Activated CD4-positive, alpha-beta T cell treated with anti-CD3 and anti-CD28 coated beads, Interleukin-2, amount 10 ng/mL, durations not matched to agents 24 days and 14 days (primary cell): ENCODE measurements at regions of chr2 and their contacts with region 1.

Region 1: GRCh38 chr2:238203094-238203972 is at the start of gene ILKAP:
- DNase-seq: peak; percentile 97
- H3K4me3 Mint-ChIP-seq: peak within 1 kb of the TSS; percentile 87
- H3K27ac Mint-ChIP-seq: peak within 1 kb of the TSS; percentile 87
- H3K4me1 Mint-ChIP-seq: peaks cover 29% of the 10 kb centered on the region
- H3K27me3 Mint-ChIP-seq: no peaks in the 10 kb centered on the region
- total RNA-seq, gene ILKAP: 74.4 and 77.4 TPM in 2 replicates

Region 2: DNA sequence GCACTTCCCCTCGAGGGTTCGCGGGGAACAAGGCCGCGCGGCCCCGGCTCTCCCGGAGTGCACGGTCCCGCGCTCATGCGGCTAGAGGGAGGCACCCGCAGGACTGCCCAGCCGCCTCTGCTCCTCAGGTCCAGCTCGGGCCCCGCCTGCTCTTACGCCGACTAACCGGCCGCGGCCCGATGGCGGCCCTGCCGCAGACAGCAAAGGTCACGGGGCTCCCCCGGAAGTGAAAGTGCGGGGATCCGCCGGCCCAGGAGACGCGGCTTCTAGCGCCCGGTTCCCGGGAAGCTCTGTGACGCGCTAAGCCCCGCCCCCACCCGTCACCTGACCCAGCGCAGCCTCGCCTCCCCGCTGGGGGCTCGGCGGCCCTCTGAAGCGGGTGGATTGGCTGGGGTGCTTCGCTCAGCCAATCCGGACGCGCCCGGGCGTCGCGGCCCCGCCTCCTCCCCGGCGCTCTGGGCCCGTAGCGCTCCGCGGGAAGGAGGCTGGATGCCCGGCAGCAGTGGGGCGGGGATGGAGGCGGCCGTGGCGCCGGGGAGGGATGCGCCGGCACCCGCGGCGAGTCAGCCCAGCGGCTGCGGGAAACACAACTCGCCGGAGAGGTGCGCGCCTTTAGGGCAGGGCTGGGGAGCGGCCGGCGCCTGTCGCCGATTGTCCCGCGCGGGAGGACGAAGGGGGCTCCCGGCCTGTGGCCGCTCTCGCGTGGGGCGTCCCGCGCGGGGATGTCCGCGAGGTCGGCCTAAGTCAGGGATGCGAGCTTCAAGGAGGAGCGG is 142.6 kb before region 1 on chr2 and contains the start of gene SCLY:
- intact Hi-C with region 1: loop called (anchors 2 kb)
- DNase-seq: peak; percentile 98
- H3K4me3 Mint-ChIP-seq: peak within 1 kb of the TSS; percentile 91
- H3K27ac Mint-ChIP-seq: peak within 1 kb of the TSS; percentile 95
- H3K4me1 Mint-ChIP-seq: peaks cover 44% of the 10 kb centered on the region
- H3K27me3 Mint-ChIP-seq: peaks cover 6% of the 10 kb centered on the region
- total RNA-seq, gene SCLY: 109 TPM in 2 replicates

Region 3: DNA sequence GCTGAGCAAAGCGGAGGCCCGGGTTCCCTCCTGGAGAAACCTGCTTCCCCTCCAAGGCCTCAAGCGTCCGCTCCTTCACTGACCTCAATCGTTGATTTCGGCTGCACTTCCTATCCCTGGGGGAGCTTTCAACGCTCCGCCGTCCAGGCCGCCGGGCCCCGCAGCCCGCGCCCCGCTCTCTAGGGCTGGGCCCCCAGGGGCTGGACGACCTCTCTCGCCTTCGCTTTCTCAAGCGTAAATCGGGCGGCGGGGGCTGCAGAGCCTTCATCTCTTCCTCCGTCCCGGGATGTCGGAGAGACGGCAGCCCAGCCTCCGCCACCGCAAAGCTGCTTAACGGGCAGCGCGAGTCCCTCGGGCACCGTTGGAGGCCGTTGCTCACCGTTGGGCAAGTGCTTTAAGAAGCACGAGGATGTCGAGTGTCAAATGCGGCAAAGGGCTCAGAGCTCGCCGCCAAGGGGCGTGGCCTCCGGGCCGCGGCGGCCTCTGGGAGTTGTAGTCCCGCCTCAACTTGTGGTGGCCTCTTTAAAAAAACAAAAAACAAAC is 28.0 kb after region 1 on chr2:
- intact Hi-C with region 1: loop called (anchors 1 kb)
- DNase-seq: peak; percentile 95
- H3K4me3 Mint-ChIP-seq: peak overlapping the region; percentile 85
- H3K27ac Mint-ChIP-seq: peak overlapping the region; percentile 67
- H3K4me1 Mint-ChIP-seq: peaks cover 14% of the 10 kb centered on the region
- H3K27me3 Mint-ChIP-seq: peaks cover 55% of the 10 kb centered on the region

Region 4: GRCh38 chr2:238239872-238240751 is 36.8 kb after region 1 on chr2 and contains the start of gene HES6:
- intact Hi-C with region 1: loop called (anchors 2 kb)
- DNase-seq: peak; percentile 95
- H3K4me3 Mint-ChIP-seq: peak within 1 kb of the TSS; percentile 83
- H3K27ac Mint-ChIP-seq: peak within 1 kb of the TSS; percentile 51
- H3K4me1 Mint-ChIP-seq: peaks cover 6% of the 10 kb centered on the region
- H3K27me3 Mint-ChIP-seq: peaks cover 46% of the 10 kb centered on the region
- total RNA-seq, gene HES6: 10.2 and 10.3 TPM in 2 replicates

Region 5: DNA sequence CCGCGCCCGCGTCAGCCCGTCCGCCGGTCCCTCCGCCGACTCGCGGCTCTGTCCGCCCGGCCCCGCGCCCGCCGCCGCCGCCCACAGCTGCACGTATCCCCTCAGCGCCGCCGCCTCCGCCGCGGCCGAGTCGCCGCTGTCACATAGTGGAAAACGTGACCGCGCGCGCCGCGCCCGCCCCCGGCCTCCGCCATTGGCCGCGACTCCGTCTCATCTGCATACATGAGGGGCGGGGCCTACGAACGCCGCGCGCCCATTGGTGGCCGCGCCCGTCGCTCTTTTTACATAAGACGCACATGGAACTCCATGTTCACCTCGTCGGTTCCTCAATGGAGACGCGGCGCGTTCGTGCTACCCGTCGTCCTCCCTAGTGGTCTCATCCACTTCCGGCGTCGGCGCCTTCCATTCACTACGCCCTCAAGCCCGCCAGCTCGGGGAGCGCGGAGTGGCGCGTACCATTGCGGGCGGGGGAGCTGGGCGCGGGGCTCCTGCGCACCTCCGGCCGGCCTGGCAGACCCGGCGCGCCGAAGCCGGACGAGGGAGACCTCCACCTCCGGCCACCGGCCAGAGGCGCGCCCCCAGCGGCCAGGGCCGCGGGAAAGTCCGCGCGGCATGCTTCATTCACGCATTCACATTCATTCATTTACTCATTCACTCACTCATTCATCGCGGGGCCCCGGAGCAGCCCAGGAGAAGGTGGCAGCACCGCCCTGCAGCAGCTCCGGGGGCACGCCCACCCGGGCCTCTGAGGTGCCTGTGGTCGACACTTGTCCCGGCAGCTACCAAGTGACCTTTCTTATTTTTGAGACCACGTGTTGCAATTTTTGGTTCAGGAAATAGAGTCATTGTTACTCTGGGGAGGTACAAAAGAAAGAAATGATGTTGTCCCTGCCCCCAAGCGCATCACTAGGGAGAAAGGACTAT is 85.6 kb after region 1 on chr2:
- intact Hi-C with region 1: loop called (anchors 1 kb)
- DNase-seq: peak; percentile 99
- H3K4me3 Mint-ChIP-seq: peak overlapping the region; percentile 93
- H3K27ac Mint-ChIP-seq: peak overlapping the region; percentile 99
- H3K4me1 Mint-ChIP-seq: peaks cover 25% of the 10 kb centered on the region
- H3K27me3 Mint-ChIP-seq: no peaks in the 10 kb centered on the region

Region 6: GRCh38 chr2:238320246-238320647 is 116.9 kb after region 1 on chr2 and contains the start of gene TRAF3IP1:
- intact Hi-C with region 1: loop called (anchors 1 kb)
- DNase-seq: peak; percentile 97
- H3K4me3 Mint-ChIP-seq: peak within 1 kb of the TSS; percentile 76
- H3K27ac Mint-ChIP-seq: no peak within 1 kb of the TSS
- H3K4me1 Mint-ChIP-seq: peaks cover 10% of the 10 kb centered on the region
- H3K27me3 Mint-ChIP-seq: peaks cover 18% of the 10 kb centered on the region
- total RNA-seq, gene TRAF3IP1: 11.0 and 12.7 TPM in 2 replicates

Region 7: GRCh38 chr2:238404406-238405216 is 201.3 kb after region 1 on chr2:
- intact Hi-C with region 1: no loop called
- DNase-seq: no peak
- H3K4me3 Mint-ChIP-seq: no peak overlapping the region
- H3K27ac Mint-ChIP-seq: no peak overlapping the region
- H3K4me1 Mint-ChIP-seq: no peaks in the 10 kb centered on the region
- H3K27me3 Mint-ChIP-seq: no peaks in the 10 kb centered on the region